ENCODE measurements at regions of chr11 and their contacts with region 1.

Region 1: DNA sequence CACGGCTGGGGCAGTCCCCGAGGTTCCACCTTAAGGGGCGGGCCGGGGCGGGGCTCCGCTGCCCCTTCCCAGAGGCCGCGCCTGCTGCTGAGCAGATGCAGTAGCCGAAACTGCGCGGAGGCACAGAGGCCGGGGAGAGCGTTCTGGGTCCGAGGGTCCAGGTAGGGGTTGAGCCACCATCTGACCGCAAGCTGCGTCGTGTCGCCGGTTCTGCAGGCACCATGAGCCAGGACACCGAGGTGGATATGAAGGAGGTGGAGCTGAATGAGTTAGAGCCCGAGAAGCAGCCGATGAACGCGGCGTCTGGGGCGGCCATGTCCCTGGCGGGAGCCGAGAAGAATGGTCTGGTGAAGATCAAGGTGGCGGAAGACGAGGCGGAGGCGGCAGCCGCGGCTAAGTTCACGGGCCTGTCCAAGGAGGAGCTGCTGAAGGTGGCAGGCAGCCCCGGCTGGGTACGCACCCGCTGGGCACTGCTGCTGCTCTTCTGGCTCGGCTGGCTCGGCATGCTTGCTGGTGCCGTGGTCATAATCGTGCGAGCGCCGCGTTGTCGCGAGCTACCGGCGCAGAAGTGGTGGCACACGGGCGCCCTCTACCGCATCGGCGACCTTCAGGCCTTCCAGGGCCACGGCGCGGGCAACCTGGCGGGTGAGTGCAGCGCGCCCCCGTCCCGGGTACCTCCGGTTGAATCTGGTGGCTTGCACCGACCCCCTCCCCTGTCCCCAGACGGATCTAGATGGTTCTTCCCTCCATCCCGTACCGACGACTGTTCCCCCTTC is at the start of gene SLC3A2:
- DNase-seq: peak; percentile 93
- ATAC-seq: peak; percentile 77
- H3K4me3 ChIP-seq: peak within 1 kb of the TSS; percentile 66 to 93 (median 78)
- H3K4me3 Mint-ChIP-seq: peak within 1 kb of the TSS; percentile 100
- H3K27ac ChIP-seq: peak within 1 kb of the TSS; percentile 86 to 90
- H3K27ac Mint-ChIP-seq: peak within 1 kb of the TSS; percentile 100
- H3K4me1 ChIP-seq: peaks cover 25 to 36% of the 10 kb centered on the region in 2 donors
- H3K4me1 Mint-ChIP-seq: peaks cover 39% of the 10 kb centered on the region
- H3K27me3 ChIP-seq: no peaks in the 10 kb centered on the region
- H3K27me3 Mint-ChIP-seq: no peaks in the 10 kb centered on the region
- CTCF ChIP-seq: peak; percentile 87
- total RNA-seq, gene SLC3A2: 148 and 175 TPM in 2 replicates

Region 2: GRCh38 chr11:62295504-62295903 is 585.5 kb before region 1 on chr11:
- CTCF ChIA-PET with region 1: no interaction called
- POLR2A ChIA-PET with region 1: no interaction called
- intact Hi-C with region 1: no loop called
- DNase-seq: no peak
- ATAC-seq: no peak
- H3K4me3 ChIP-seq: no peak overlapping the region
- H3K4me3 Mint-ChIP-seq: no peak overlapping the region
- H3K27ac ChIP-seq: no peak overlapping the region
- H3K27ac Mint-ChIP-seq: no peak overlapping the region
- H3K4me1 ChIP-seq: no peaks in the 10 kb centered on the region
- H3K4me1 Mint-ChIP-seq: no peaks in the 10 kb centered on the region
- H3K27me3 ChIP-seq: peaks cover 0 to 14% (median under 1%) of the 10 kb centered on the region in 4 experiments
- H3K27me3 Mint-ChIP-seq: peaks cover 35% of the 10 kb centered on the region
- CTCF ChIP-seq: no peak

Region 3: DNA sequence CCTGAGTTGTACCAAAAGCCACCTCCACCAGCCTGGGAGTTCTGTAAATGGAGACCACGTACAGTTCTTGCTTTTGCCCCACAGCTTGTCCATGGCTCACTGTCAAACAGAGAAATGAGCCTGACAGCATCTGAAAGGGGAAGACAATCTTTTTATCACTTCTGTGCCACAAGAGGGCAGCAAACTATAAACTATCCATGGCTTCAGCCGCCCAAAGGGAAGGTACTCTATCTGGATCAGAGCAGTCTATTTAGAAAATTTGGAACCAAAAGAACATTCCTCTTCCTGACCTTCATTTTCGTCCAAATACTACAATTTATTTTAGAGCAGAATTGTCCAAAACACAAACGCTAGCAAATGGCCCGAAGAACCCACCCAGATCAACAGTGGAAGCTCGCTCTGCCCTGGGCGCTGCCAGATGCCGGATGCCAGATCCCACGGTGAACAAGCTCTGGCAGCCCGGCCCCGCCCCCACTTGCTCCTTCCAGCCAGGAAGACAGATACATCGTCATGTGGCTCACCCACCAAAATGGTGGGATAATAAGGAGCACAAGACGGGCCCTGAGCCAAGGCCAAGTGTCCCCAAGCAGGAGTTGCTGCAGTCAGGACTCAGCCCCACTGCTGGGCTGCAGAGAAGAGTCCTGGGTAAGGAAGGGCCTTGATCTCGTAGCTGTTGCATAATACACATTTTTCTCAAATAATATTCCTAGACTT is 486.0 kb before region 1 on chr11:
- CTCF ChIA-PET with region 1: interaction called, 4 read pairs
- POLR2A ChIA-PET with region 1: no interaction called
- intact Hi-C with region 1: loop called (anchors 5 kb)
- DNase-seq: peak; percentile 81
- ATAC-seq: peak; percentile 68
- H3K4me3 ChIP-seq: no peak overlapping the region
- H3K4me3 Mint-ChIP-seq: no peak overlapping the region
- H3K27ac ChIP-seq: no peak overlapping the region
- H3K27ac Mint-ChIP-seq: no peak overlapping the region
- H3K4me1 ChIP-seq: no peaks in the 10 kb centered on the region
- H3K4me1 Mint-ChIP-seq: peaks cover 2% of the 10 kb centered on the region
- H3K27me3 ChIP-seq: peaks cover 0 to 5% (median 0%) of the 10 kb centered on the region in 4 experiments
- H3K27me3 Mint-ChIP-seq: peaks cover 11% of the 10 kb centered on the region
- CTCF ChIP-seq: peak; percentile 79

Region 4: GRCh38 chr11:62671575-62672389 is 209.2 kb before region 1 on chr11 and contains the starts of genes LBHD1 and UQCC3:
- CTCF ChIA-PET with region 1: interaction called, 4 read pairs
- POLR2A ChIA-PET with region 1: interaction called, 3 read pairs
- intact Hi-C with region 1: loop called (anchors 2 kb)
- DNase-seq: peak; percentile 86
- ATAC-seq: peak; percentile 77
- H3K4me3 ChIP-seq: peak within 1 kb of the TSS; percentile 85 to 97 (median 87)
- H3K4me3 Mint-ChIP-seq: peak within 1 kb of the TSS; percentile 100
- H3K27ac ChIP-seq: peak within 1 kb of the TSS; percentile 56 to 71
- H3K27ac Mint-ChIP-seq: peak within 1 kb of the TSS; percentile 97
- H3K4me1 ChIP-seq: peaks cover 21 to 36% of the 10 kb centered on the region in 2 donors
- H3K4me1 Mint-ChIP-seq: peaks cover 48% of the 10 kb centered on the region
- H3K27me3 ChIP-seq: no peaks in the 10 kb centered on the region
- H3K27me3 Mint-ChIP-seq: no peaks in the 10 kb centered on the region
- CTCF ChIP-seq: no peak
- total RNA-seq, gene LBHD1: 32.5 and 33.3 TPM in 2 replicates
- total RNA-seq, gene UQCC3: 6.5 and 8.9 TPM in 2 replicates

Region 5: GRCh38 chr11:62787005-62787759 is 93.8 kb before region 1 on chr11 and contains the start of gene TMEM179B:
- CTCF ChIA-PET with region 1: interaction called, 39 read pairs
- POLR2A ChIA-PET with region 1: interaction called, 32 read pairs
- intact Hi-C with region 1: loop called (anchors 1 kb)
- DNase-seq: peak; percentile 98
- ATAC-seq: peak; percentile 70
- H3K4me3 ChIP-seq: peak within 1 kb of the TSS; percentile 87 to 97 (median 94)
- H3K4me3 Mint-ChIP-seq: peak within 1 kb of the TSS; percentile 97
- H3K27ac ChIP-seq: peak within 1 kb of the TSS; percentile 68 to 78
- H3K27ac Mint-ChIP-seq: peak within 1 kb of the TSS; percentile 96
- H3K4me1 ChIP-seq: peaks cover 27 to 35% of the 10 kb centered on the region in 2 donors
- H3K4me1 Mint-ChIP-seq: peaks cover 48% of the 10 kb centered on the region
- H3K27me3 ChIP-seq: no peaks in the 10 kb centered on the region
- H3K27me3 Mint-ChIP-seq: no peaks in the 10 kb centered on the region
- CTCF ChIP-seq: peak; percentile 65
- total RNA-seq, gene TMEM179B: 62.3 and 71.5 TPM in 2 replicates

Region 6: GRCh38 chr11:62855571-62856332 is 25.2 kb before region 1 on chr11:
- CTCF ChIA-PET with region 1: interaction called, 12 read pairs
- POLR2A ChIA-PET with region 1: interaction called, 20 read pairs
- intact Hi-C with region 1: loop called (anchors 1 kb)
- DNase-seq: peak; percentile 99
- ATAC-seq: peak; percentile 92
- H3K4me3 ChIP-seq: peak overlapping the region; percentile 68 to 100 (median 99)
- H3K4me3 Mint-ChIP-seq: peak overlapping the region; percentile 99
- H3K27ac ChIP-seq: peak overlapping the region; percentile 65 to 84
- H3K27ac Mint-ChIP-seq: peak overlapping the region; percentile 98
- H3K4me1 ChIP-seq: peaks cover 39 to 58% of the 10 kb centered on the region in 2 donors
- H3K4me1 Mint-ChIP-seq: peaks cover 60% of the 10 kb centered on the region
- H3K27me3 ChIP-seq: no peaks in the 10 kb centered on the region
- H3K27me3 Mint-ChIP-seq: no peaks in the 10 kb centered on the region
- CTCF ChIP-seq: no peak

Region 7: DNA sequence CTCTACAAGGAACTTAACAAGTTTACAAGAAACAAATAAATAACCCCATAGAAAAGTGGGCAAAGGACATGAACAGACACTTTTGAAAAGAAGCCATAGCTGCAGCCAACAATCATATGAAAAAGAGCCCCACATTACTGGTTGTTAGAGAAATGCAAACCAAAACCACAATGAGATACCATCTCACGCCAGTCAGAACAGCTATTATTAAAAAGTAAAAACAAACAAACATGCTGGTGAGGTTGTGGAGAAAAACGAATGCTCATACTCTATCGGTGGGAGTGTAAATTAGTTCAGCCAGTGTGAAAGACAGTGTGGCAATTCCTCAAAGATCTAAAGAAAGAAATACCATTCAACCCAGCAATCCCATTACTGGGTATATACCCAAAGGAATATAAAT is 368.0 kb after region 1 on chr11:
- CTCF ChIA-PET with region 1: no interaction called
- POLR2A ChIA-PET with region 1: no interaction called
- intact Hi-C with region 1: no loop called
- DNase-seq: no peak
- ATAC-seq: no peak
- H3K4me3 ChIP-seq: no peak overlapping the region
- H3K4me3 Mint-ChIP-seq: no peak overlapping the region
- H3K27ac ChIP-seq: no peak overlapping the region
- H3K27ac Mint-ChIP-seq: no peak overlapping the region
- H3K4me1 ChIP-seq: no peaks in the 10 kb centered on the region
- H3K4me1 Mint-ChIP-seq: no peaks in the 10 kb centered on the region
- H3K27me3 ChIP-seq: peaks cover 0 to 10% (median 8%) of the 10 kb centered on the region in 4 experiments
- H3K27me3 Mint-ChIP-seq: peaks cover 42% of the 10 kb centered on the region
- CTCF ChIP-seq: no peak

Measured in B cell (primary cell).